SK-N-SH (cell line): ENCODE measurements at regions of chr2 and their contacts with region 1.

Region 1: DNA sequence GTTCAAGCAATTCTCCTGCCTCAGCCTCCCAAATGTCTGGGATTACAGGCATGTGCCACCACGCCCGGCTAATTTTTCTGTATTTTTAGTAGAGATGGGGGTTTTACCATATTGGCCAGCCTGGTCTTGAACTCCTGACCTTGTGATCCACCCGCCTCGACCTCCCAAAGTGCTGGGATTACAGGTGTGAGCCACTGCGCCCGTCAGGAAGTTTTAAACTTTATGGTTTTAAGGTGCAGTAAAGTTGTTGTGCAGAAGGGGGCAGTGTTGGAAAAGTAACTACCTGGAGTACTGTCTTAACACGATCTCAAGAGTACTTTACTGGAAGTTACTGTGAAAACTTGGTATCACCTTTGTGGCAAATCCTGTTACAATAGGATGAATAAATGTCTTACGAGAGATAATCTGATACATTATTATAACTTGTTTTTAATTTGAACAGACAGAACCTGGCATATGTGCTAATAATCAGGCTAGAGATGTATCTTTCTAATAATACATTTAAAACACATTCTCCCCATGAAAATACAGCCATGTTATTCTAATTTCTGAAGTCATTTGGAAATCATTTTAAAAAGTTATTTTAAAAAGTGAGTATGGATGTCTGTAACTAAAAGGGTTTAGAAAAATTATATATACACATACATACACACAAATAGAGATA is 10.8 kb downstream of the SPDYA start:
- DNase-seq: peak; percentile 57
- H3K4me3 ChIP-seq: no peak overlapping the region
- H3K27ac ChIP-seq: no peak overlapping the region
- H3K4me1 ChIP-seq: no peaks in the 10 kb centered on the region
- H3K27me3 ChIP-seq: no peaks in the 10 kb centered on the region
- CTCF ChIP-seq: peak; percentile 87
- EP300 ChIP-seq: no peak
- RAD21 ChIP-seq: peak; percentile 84

Region 2: GRCh38 chr2:28709101-28709500 is 112.3 kb before region 1 on chr2:
- CTCF ChIA-PET with region 1: no interaction called
- POLR2A ChIA-PET with region 1: no interaction called
- DNase-seq: no peak
- H3K4me3 ChIP-seq: no peak overlapping the region
- H3K27ac ChIP-seq: no peak overlapping the region
- H3K4me1 ChIP-seq: peaks cover 0 to 6% of the 10 kb centered on the region in 2 experiments; a peak in 2 of 4 replicates
- H3K27me3 ChIP-seq: no peaks in the 10 kb centered on the region
- CTCF ChIP-seq: no peak
- EP300 ChIP-seq: no peak
- RAD21 ChIP-seq: no peak

Region 3: GRCh38 chr2:28810384-28811285 is 10.8 kb before region 1 on chr2 and contains the start of gene SPDYA:
- CTCF ChIA-PET with region 1: interaction called, 22 read pairs
- POLR2A ChIA-PET with region 1: no interaction called
- DNase-seq: peak; percentile 99
- H3K4me3 ChIP-seq: peak within 1 kb of the TSS; percentile 56 to 57; a peak in 3 of 4 replicates
- H3K27ac ChIP-seq: peak within 1 kb of the TSS in 1 of 2 experiments; percentile 43; a peak in 1 of 4 replicates
- H3K4me1 ChIP-seq: peaks cover 0 to 5% of the 10 kb centered on the region in 2 experiments; a peak in 1 of 4 replicates
- H3K27me3 ChIP-seq: no peaks in the 10 kb centered on the region
- CTCF ChIP-seq: no peak
- EP300 ChIP-seq: no peak
- RAD21 ChIP-seq: no peak
- polyA plus RNA-seq, gene SPDYA: 0.10 TPM in 1 of 2 replicates, not detected in the other